ENCODE measurements at regions of chr21 and their contacts with region 1.

Region 1: GRCh38 chr21:29085106-29085752 is 11.8 kb upstream of the CCT8 start:
- DNase-seq: no peak
- H3K4me3 ChIP-seq: no peak overlapping the region
- H3K27ac ChIP-seq: no peak overlapping the region
- H3K4me1 ChIP-seq: no peaks in the 10 kb centered on the region
- H3K27me3 ChIP-seq: no peaks in the 10 kb centered on the region
- CTCF ChIP-seq: no peak
- POLR2A ChIP-seq: no peak

Region 2: DNA sequence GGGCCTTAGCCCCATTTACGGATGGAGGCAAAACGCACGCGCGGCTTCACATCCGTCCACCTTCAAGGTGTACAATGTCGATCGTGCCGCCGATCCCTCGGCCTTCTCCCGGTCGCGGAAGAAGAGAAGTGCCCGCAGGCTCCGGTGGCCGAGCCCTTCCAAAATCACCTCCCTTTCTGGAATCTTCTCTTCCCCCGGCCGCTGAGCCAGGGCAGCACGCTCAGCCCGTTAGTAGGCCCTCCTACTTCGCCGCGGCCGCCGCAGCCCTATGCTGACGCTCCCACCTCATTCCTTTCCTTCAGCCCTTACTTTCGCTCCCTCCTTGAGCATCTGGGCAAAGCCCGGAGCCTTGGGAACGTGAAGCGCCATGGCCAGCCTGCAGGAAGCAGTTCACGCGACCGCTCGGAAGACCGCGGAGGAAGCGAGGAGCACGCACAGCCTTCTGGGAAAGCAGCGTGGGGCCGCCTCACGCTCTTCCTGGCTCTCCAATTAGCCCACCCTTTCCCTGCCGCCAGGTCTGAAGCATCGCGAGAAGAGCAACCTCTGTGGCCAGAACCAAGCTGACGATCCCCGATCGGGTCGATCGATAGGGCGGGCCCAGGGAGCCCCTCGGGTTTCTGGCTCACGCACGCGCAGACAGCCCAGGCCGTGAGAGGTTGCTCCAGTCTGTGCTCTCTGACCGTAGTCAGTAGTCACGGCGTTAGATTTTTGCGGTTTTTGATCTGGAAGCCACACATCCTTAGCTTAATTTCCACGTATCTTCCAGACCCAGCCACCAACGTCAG is 11.8 kb before region 1 on chr21 and contains the start of gene CCT8:
- intact Hi-C with region 1: no loop called
- DNase-seq: peak; percentile 97 to 98
- H3K4me3 ChIP-seq: peak within 1 kb of the TSS; percentile 78 to 97 (median 96)
- H3K27ac ChIP-seq: peak within 1 kb of the TSS; percentile 91 to 95
- H3K4me1 ChIP-seq: peaks cover 0 to 11% of the 10 kb centered on the region in 2 donors
- H3K27me3 ChIP-seq: no peaks in the 10 kb centered on the region
- CTCF ChIP-seq: no peak
- POLR2A ChIP-seq: peak; percentile 65
- total RNA-seq, gene CCT8: 104 to 155 (median 121) TPM

Region 3: GRCh38 chr21:29365661-29366265 is 280.5 kb after region 1 on chr21:
- intact Hi-C with region 1: loop called (anchors 5 kb)
- DNase-seq: no peak
- H3K4me3 ChIP-seq: no peak overlapping the region
- H3K27ac ChIP-seq: no peak overlapping the region
- H3K4me1 ChIP-seq: no peaks in the 10 kb centered on the region
- H3K27me3 ChIP-seq: no peaks in the 10 kb centered on the region
- CTCF ChIP-seq: no peak
- POLR2A ChIP-seq: no peak

Measured in breast epithelium (tissue), 4 donors.